MCF 10A (cell line): ENCODE measurements at regions of chr1 and their contacts with region 1.

Region 1: DNA sequence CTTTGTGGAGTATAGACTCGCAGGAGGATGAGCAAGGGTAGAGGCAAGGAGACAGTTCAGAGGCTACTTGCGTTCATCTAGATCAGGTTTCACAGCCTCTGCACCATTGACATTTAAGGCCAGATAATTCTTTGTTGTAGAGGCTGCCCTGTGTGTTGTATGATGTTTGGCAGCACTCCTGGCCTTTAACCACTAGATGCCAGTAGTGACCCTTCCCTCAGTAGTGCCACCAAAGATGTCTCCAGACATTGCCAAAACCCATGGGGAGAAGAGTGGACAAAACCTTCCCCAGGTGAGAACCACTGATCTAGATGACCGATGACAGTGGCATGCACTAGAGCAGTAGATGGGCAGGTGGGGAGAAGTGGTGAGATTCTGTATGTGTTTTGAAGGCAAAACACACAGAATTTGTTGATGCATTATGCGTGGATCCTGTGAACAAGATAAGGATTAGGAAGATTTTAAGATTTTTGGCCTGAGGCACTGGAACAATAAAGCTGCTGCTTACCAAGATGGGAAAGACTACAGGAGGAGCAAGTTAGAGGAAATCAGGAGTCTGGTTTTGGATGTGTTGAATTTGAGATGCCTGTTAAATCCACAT is 9.9 kb upstream of the COG2 start:
- DNase-seq: peak; percentile 88
- H3K4me3 Mint-ChIP-seq: no peak overlapping the region
- H3K27ac Mint-ChIP-seq: no peak overlapping the region
- H3K4me1 Mint-ChIP-seq: peaks cover 4% of the 10 kb centered on the region
- H3K27me3 Mint-ChIP-seq: peaks cover 17% of the 10 kb centered on the region
- CTCF ChIP-seq: peak; percentile 84

Region 2: DNA sequence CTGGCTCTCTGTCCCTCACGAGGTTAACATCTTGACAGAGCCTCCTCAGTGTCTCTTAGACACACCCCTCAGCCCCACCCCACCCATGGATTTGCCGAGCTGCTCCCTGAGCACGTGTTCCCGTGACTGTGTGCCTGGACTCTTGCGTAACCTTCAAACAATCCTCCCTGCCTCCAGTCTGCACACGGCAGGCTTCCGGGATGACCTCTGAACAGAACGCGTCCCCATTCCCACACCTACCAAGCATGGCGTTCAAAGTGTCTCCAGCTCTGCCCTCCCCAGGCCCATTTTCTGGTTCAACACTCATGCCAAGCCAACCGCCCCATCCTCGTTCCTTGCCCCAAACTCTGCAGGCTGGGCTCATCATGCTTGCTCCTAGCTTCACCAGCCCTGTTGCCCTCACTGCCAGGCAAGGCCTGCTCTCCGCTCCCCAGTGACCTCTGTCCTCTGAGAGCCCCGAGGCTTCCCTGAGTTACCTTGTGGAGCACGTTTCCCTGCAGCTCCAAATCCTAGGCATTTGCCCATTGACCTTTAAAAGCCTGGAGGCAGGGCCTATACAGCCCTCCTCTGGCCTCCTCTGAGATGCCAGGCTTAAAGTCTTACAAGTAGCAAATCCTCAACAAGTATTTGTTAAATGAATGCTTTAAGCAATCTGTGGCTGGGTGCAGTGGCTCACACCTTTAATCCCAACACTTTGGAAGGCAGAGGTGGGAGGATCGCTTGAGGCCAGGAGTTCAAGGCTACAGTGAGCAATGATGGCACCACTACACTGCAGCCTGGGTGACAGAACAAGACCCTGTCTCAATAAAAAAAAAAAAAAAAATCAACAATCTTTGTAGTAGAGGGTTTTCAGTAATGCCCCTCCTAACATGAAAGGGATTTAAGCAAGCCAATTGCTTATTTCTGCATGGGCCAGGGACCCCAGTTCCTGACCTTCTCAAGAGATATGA is 76.5 kb after region 1 on chr1:
- CTCF ChIA-PET with region 1: no interaction called
- POLR2A ChIA-PET with region 1: no interaction called
- intact Hi-C with region 1: no loop called
- DNase-seq: peak; percentile 95
- H3K4me3 Mint-ChIP-seq: no peak overlapping the region
- H3K27ac Mint-ChIP-seq: no peak overlapping the region
- H3K4me1 Mint-ChIP-seq: peaks cover 14% of the 10 kb centered on the region
- H3K27me3 Mint-ChIP-seq: no peaks in the 10 kb centered on the region
- CTCF ChIP-seq: no peak

Region 3: GRCh38 chr1:230772457-230773395 is 140.4 kb after region 1 on chr1:
- CTCF ChIA-PET with region 1: interaction called, 6 read pairs
- POLR2A ChIA-PET with region 1: no interaction called
- intact Hi-C with region 1: loop called (anchors 1 kb)
- DNase-seq: peak; percentile 72
- H3K4me3 Mint-ChIP-seq: no peak overlapping the region
- H3K27ac Mint-ChIP-seq: no peak overlapping the region
- H3K4me1 Mint-ChIP-seq: peaks cover 7% of the 10 kb centered on the region
- H3K27me3 Mint-ChIP-seq: no peaks in the 10 kb centered on the region
- CTCF ChIP-seq: peak; percentile 54

Region 4: GRCh38 chr1:230792691-230793665 is 160.6 kb after region 1 on chr1:
- CTCF ChIA-PET with region 1: no interaction called
- POLR2A ChIA-PET with region 1: no interaction called
- intact Hi-C with region 1: loop called (anchors 1 kb)
- DNase-seq: peak; percentile 39
- H3K4me3 Mint-ChIP-seq: no peak overlapping the region
- H3K27ac Mint-ChIP-seq: no peak overlapping the region
- H3K4me1 Mint-ChIP-seq: no peaks in the 10 kb centered on the region
- H3K27me3 Mint-ChIP-seq: peaks cover 52% of the 10 kb centered on the region
- CTCF ChIP-seq: peak; percentile 28

Region 5: GRCh38 chr1:230978491-230979388 is 346.4 kb after region 1 on chr1 and contains the starts of genes ARV1 and TTC13:
- CTCF ChIA-PET with region 1: no interaction called
- POLR2A ChIA-PET with region 1: no interaction called
- intact Hi-C with region 1: loop called (anchors 2 kb)
- DNase-seq: peak; percentile 100
- H3K4me3 Mint-ChIP-seq: no peak within 1 kb of the TSS
- H3K27ac Mint-ChIP-seq: peak within 1 kb of the TSS; percentile 83
- H3K4me1 Mint-ChIP-seq: peaks cover 7% of the 10 kb centered on the region
- H3K27me3 Mint-ChIP-seq: no peaks in the 10 kb centered on the region
- CTCF ChIP-seq: peak; percentile 15
- total RNA-seq, gene ARV1: 41.8 and 51.8 TPM in 2 replicates
- total RNA-seq, gene TTC13: 29.9 and 35.2 TPM in 2 replicates

Region 6: GRCh38 chr1:231091831-231092301 is 459.5 kb after region 1 on chr1:
- CTCF ChIA-PET with region 1: no interaction called
- POLR2A ChIA-PET with region 1: no interaction called
- intact Hi-C with region 1: loop called (anchors 1 kb)
- DNase-seq: peak; percentile 79
- H3K4me3 Mint-ChIP-seq: no peak overlapping the region
- H3K27ac Mint-ChIP-seq: no peak overlapping the region
- H3K4me1 Mint-ChIP-seq: peaks cover 4% of the 10 kb centered on the region
- H3K27me3 Mint-ChIP-seq: peaks cover 76% of the 10 kb centered on the region
- CTCF ChIP-seq: peak; percentile 87

Region 7: DNA sequence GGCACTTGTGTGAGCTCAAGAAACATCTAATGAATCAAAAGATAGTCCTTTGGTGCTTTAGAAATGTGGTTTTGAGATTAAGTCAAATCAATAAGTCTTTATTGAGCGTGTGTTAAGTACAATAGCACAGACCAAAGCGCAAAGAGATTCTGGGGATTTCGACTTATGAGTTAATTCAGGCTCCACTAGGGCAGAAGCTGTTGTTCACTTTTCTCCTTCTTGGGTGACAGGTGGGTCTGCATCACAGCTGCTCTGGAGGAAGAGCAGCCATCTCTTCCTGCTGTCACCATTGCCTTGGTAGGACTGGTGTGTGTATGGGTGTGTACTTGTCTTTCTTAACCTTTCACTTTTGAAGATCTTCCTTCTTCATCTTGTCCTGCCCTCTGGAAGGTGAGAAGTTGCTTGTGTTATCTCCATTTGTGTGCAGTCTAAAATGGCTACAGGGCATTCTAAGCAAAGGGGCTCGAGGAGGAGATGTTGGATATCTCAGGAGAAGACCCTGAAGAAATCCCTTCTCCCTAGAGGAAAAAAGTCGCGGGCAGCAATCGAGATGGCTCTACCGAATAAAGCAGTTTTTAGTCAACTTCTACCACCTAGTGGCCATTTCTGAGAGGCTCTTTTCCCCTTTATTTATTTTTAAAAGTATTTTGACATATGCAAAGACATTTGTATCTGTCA is 971.4 kb after region 1 on chr1:
- CTCF ChIA-PET with region 1: no interaction called
- POLR2A ChIA-PET with region 1: no interaction called
- intact Hi-C with region 1: loop called (anchors 5 kb)
- DNase-seq: peak; percentile 84
- H3K4me3 Mint-ChIP-seq: peak overlapping the region; percentile 84
- H3K27ac Mint-ChIP-seq: peak overlapping the region; percentile 66
- H3K4me1 Mint-ChIP-seq: peaks cover 12% of the 10 kb centered on the region
- H3K27me3 Mint-ChIP-seq: peaks cover 26% of the 10 kb centered on the region
- CTCF ChIP-seq: peak; percentile 91